Natural killer cell (primary cell): ENCODE measurements at regions of chr1 and their contacts with region 1.

Region 1: GRCh38 chr1:224377676-224378006 is 21.0 kb downstream of the CNIH4 start:
- DNase-seq: peak; percentile 25 to 47
- ATAC-seq: peak; percentile 80 to 84 (median 83)
- H3K4me3 ChIP-seq: no peak overlapping the region
- H3K4me3 Mint-ChIP-seq: peak overlapping the region; percentile 70
- H3K27ac ChIP-seq: peak overlapping the region; percentile 60
- H3K27ac Mint-ChIP-seq: peak overlapping the region; percentile 91
- H3K4me1 ChIP-seq: peaks cover 61% of the 10 kb centered on the region
- H3K4me1 Mint-ChIP-seq: peaks cover 88 to 92% of the 10 kb centered on the region in 2 donors
- H3K27me3 ChIP-seq: no peaks in the 10 kb centered on the region
- H3K27me3 Mint-ChIP-seq: no peaks in the 10 kb centered on the region
- CTCF ChIP-seq: no peak

Region 2: DNA sequence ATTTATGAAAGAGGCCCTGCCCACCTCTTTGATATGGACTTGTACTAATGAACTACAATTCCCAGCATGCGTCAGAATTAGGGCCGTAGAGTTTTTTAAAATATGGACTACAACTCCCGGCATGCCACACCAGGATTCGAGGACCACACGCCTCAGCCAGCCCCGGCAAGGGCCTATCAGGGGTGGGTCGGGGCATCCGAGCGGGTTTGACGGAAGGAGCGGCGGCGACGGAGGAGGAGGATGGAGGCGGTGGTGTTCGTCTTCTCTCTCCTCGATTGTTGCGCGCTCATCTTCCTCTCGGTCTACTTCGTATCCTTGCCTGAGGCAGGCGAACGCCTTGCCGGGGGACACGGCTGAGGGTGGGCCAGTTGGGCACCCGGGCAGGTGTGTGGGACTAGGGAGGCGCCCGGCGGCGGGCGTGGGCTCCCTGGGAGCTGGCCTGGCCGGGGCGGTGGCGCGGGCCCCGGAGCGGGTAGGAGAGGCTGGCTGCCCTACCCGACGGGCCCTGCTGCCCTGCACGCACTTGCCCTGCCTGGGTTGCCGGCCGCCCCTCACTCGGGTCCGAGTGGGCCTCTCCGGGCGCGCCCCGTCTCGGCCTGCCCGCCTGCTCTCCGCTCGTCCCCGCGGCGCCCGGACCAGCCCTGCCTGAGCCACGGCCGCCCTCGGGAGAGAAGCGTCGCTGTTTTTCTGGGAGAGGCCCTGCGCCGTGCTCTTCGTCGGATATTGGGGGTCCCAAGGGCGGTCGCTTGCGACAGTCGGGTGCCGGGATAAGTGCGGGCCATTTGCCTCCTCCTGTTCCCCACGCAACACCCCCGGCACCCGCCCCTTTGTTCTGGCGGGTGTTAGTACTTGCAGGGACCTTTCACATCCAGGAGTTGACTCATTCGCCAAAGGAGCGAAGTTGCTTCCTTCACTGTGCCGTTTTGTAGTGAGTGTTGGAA is 20.7 kb before region 1 on chr1 and contains the start of gene CNIH4:
- intact Hi-C with region 1: loop called (anchors 2 kb)
- DNase-seq: peak; percentile 78 to 96
- ATAC-seq: peak; percentile 97 to 99 (median 98)
- H3K4me3 ChIP-seq: peak within 1 kb of the TSS; percentile 61
- H3K4me3 Mint-ChIP-seq: peak within 1 kb of the TSS; percentile 95
- H3K27ac ChIP-seq: peak within 1 kb of the TSS; percentile 51
- H3K27ac Mint-ChIP-seq: peak within 1 kb of the TSS; percentile 85 to 94
- H3K4me1 ChIP-seq: peaks cover 14% of the 10 kb centered on the region
- H3K4me1 Mint-ChIP-seq: peaks cover 39% of the 10 kb centered on the region in 2 donors
- H3K27me3 ChIP-seq: no peaks in the 10 kb centered on the region
- H3K27me3 Mint-ChIP-seq: no peaks in the 10 kb centered on the region
- CTCF ChIP-seq: no peak
- total RNA-seq, gene CNIH4: 20.4 to 32.4 (median 27.3) TPM

Region 3: GRCh38 chr1:224411766-224412165 is 34.1 kb after region 1 on chr1:
- intact Hi-C with region 1: no loop called
- DNase-seq: no peak
- ATAC-seq: peak; percentile 44 to 61 (median 44)
- H3K4me3 ChIP-seq: no peak overlapping the region
- H3K4me3 Mint-ChIP-seq: no peak overlapping the region
- H3K27ac ChIP-seq: no peak overlapping the region
- H3K27ac Mint-ChIP-seq: peak overlapping the region; percentile 75 to 80
- H3K4me1 ChIP-seq: peaks cover 5% of the 10 kb centered on the region
- H3K4me1 Mint-ChIP-seq: peaks cover 21 to 36% of the 10 kb centered on the region in 2 donors
- H3K27me3 ChIP-seq: no peaks in the 10 kb centered on the region
- H3K27me3 Mint-ChIP-seq: no peaks in the 10 kb centered on the region
- CTCF ChIP-seq: no peak

Region 4: DNA sequence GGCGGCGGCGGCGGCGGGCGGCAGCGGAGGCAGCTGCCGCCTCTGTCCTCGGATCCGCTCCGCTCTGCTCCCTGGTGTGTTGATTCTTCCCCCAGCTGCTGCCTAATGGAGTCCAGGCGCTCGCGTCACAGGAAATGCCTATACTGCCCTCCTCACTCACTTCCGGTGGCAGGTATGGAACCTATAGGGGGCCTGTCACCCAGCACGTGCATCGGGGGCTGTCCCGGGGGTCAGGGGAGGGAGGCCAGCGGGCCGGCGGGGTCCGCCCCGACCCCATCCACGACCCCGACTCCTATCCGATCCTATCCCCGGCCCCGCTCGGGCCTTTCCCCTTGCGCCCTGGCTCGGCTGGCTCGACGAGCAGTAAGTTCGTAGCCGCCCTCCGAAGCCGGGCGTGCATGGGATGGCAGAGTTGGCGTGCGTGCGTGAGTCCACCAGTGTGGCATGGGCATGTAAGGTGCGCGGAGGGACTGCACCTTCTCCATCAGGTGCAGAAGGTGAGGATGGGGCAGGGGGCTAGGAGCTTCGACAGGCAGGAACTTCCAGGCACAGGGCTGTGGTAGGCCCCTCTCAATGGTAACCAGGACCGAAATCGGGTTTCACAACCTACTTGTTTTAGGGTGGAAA is 57.2 kb after region 1 on chr1 and contains the start of gene WDR26:
- intact Hi-C with region 1: loop called (anchors 5 kb)
- DNase-seq: peak; percentile 76 to 93
- ATAC-seq: peak; percentile 72 to 86 (median 81)
- H3K4me3 ChIP-seq: peak within 1 kb of the TSS; percentile 86
- H3K4me3 Mint-ChIP-seq: peak within 1 kb of the TSS; percentile 90
- H3K27ac ChIP-seq: peak within 1 kb of the TSS; percentile 94
- H3K27ac Mint-ChIP-seq: peak within 1 kb of the TSS; percentile 86 to 88
- H3K4me1 ChIP-seq: peaks cover 17% of the 10 kb centered on the region
- H3K4me1 Mint-ChIP-seq: peaks cover 46 to 49% of the 10 kb centered on the region in 2 donors
- H3K27me3 ChIP-seq: no peaks in the 10 kb centered on the region
- H3K27me3 Mint-ChIP-seq: no peaks in the 10 kb centered on the region
- CTCF ChIP-seq: peak; percentile 27
- total RNA-seq, gene WDR26: 244 to 310 (median 261) TPM

Region 5: GRCh38 chr1:224482619-224483018 is 105.0 kb after region 1 on chr1:
- intact Hi-C with region 1: no loop called
- DNase-seq: no peak
- ATAC-seq: no peak
- H3K4me3 ChIP-seq: no peak overlapping the region
- H3K4me3 Mint-ChIP-seq: no peak overlapping the region
- H3K27ac ChIP-seq: no peak overlapping the region
- H3K27ac Mint-ChIP-seq: no peak overlapping the region
- H3K4me1 ChIP-seq: no peaks in the 10 kb centered on the region
- H3K4me1 Mint-ChIP-seq: no peaks in the 10 kb centered on the region
- H3K27me3 ChIP-seq: no peaks in the 10 kb centered on the region
- H3K27me3 Mint-ChIP-seq: no peaks in the 10 kb centered on the region
- CTCF ChIP-seq: no peak